Astrocyte of the cerebellum (primary cell): ENCODE measurements at regions of chr11 and their contacts with region 1.

Region 1: DNA sequence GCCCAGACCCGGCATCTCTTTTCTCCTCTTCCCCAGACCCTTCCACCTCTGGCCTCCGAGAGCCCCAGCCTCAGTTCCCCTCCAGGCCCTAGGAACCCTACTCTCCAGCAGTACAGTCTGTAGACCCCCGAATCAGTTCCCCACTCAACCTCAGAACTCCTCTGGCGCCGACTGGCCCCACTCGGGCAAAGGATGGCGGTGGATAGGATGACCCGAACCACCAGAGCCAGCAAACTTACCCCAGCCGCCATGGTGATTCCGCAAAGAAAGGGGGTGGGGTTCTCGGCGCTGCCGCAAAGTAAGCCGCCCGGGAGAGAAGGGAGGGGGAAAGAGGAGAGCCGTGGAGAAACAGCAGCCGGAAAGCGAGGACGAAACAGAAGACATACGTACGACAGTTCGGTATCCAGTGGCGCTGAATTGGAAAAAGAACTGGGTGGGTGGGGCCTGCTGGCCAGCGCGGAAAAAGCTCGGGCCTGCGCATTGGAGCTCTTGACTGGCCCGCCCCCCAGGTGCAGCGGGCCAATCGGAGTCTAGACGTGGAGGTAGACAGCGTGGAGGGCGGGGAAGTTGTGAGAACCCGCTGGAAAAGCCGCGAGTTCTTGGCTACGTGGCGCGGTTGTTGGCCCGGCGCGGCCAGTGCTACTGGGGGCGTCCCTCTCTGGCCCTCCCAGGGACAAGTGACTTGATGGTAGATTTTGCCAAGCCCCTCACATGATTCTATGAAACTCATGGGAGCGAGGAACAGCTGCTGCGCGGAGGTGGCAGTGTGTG is at the start of gene EEF1G:
- DNase-seq: peak; percentile 100
- H3K4me3 ChIP-seq: peak within 1 kb of the TSS; percentile 87
- CTCF ChIP-seq: no peak

Region 2: GRCh38 chr11:62632492-62632891 is 58.7 kb after region 1 on chr11:
- in situ Hi-C with region 1: loop called (anchors 5 kb)
- DNase-seq: no peak
- H3K4me3 ChIP-seq: no peak overlapping the region
- CTCF ChIP-seq: no peak

Region 3: DNA sequence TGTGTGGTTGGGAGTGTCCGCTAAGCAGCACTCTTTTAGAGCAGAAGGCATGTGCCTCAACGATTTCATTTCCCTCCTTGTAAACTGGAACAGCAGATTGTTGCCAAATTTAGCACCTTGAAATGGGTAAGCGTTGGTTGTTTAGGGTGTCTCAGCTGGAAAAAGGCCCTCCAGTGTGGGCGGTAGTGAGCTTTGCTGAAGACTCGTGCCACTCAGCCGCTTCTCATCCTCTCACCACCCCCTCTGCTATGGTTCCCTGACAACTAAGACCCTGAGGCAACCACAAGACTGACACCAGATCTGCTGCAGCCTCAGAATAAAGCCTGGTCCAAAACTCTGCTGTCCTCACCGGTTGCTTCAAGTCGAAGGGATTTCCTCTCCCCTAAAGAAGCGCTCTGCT is 1622.8 kb after region 1 on chr11:
- in situ Hi-C with region 1: no loop called
- DNase-seq: no peak
- H3K4me3 ChIP-seq: no peak overlapping the region
- CTCF ChIP-seq: no peak